ENCODE measurements at regions of chr2 and their contacts with region 1.

Region 1: GRCh38 chr2:191539068-191539467 is 138.9 kb upstream of the NABP1 start:
- DNase-seq: peak; percentile 41 to 73 (median 68)
- H3K4me3 ChIP-seq: no peak overlapping the region
- H3K27ac ChIP-seq: no peak overlapping the region
- H3K4me1 ChIP-seq: peaks cover 0 to 6% (median 2%) of the 10 kb centered on the region in 4 experiments
- H3K27me3 ChIP-seq: no peaks in the 10 kb centered on the region

Region 2: DNA sequence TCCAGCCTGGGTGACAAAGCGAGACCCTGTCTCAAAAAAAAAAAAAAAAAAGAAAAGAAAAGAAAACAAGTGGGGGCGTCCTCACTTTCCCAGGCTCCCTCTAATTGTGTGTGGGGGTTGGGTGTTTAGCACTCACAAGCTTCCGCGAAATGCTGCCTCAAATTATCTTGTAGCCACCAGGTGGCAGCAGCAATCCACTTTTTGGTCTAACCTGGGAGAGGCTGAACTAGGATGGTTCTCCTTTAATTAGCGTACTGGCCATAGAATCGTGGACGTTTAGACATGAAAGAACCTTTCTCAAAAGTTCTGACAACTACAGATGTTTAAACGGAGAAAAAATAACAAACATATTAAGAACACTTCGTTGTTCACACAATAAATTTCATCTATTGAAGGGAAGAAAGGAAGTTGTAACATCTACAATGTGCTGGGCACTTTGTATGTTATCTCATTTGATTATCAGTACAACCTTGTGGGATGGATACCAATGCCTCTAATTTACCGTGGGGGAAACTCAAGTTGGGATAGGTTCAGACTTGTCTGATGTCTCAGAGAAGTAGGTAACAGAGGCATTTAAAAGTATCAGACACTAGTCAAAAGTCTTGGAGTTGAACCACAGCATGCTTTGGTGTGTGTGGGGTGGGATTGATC is 16.1 kb after region 1 on chr2:
- CTCF ChIA-PET with region 1: interaction called, 11 read pairs
- POLR2A ChIA-PET with region 1: no interaction called
- DNase-seq: peak; percentile 81 to 89 (median 83)
- H3K4me3 ChIP-seq: peak overlapping the region in 1 of 7 experiments; percentile 57
- H3K27ac ChIP-seq: no peak overlapping the region
- H3K4me1 ChIP-seq: peaks cover 0 to 3% (median 1%) of the 10 kb centered on the region in 4 experiments
- H3K27me3 ChIP-seq: no peaks in the 10 kb centered on the region

Measured in common myeloid progenitor, CD34-positive (primary cell).